ENCODE measurements at regions of chr11 and their contacts with region 1.

Region 1: GRCh38 chr11:75615706-75616105 is 53.1 kb downstream of the MAP6 start:
- DNase-seq: no peak
- H3K4me3 ChIP-seq: no peak overlapping the region
- H3K27ac ChIP-seq: no peak overlapping the region
- H3K4me1 ChIP-seq: peaks cover 8% of the 10 kb centered on the region
- H3K27me3 ChIP-seq: no peaks in the 10 kb centered on the region
- CTCF ChIP-seq: no peak
- POLR2A ChIP-seq: no peak

Region 2: GRCh38 chr11:75195121-75195551 is 420.6 kb before region 1 on chr11:
- CTCF ChIA-PET with region 1: no interaction called
- POLR2A ChIA-PET with region 1: no interaction called
- dilution Hi-C with region 1: no loop called
- intact Hi-C with region 1: no loop called
- DNase-seq: peak; percentile 10
- H3K4me3 ChIP-seq: no peak overlapping the region
- H3K27ac ChIP-seq: no peak overlapping the region
- H3K4me1 ChIP-seq: peaks cover 4% of the 10 kb centered on the region
- H3K27me3 ChIP-seq: peaks cover 0 to 2% of the 10 kb centered on the region in 2 experiments
- CTCF ChIP-seq: no peak
- POLR2A ChIP-seq: no peak

Region 3: DNA sequence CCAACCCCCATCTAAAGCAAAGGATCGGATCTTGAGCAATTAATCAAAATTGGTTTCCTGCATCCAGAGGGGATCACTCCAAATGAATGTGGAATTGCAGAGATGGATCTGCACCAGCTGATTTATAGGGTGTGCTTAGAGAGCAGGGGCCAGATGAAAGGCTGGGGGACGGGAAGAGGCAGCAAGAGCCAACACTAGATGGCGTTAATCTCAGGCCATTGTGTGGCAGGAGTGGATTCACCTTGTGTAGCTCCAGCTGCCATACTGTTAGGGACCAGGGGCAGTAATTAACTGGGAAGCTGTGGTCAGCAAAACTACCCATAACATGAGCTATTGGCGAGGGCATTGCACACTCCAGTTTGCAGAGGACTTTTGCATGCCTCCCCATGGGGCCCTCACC is 18.1 kb before region 1 on chr11:
- CTCF ChIA-PET with region 1: interaction called, 16 read pairs
- POLR2A ChIA-PET with region 1: no interaction called
- dilution Hi-C with region 1: no loop called
- intact Hi-C with region 1: no loop called
- DNase-seq: peak; percentile 41
- H3K4me3 ChIP-seq: no peak overlapping the region
- H3K27ac ChIP-seq: no peak overlapping the region
- H3K4me1 ChIP-seq: peaks cover 5% of the 10 kb centered on the region
- H3K27me3 ChIP-seq: no peaks in the 10 kb centered on the region
- CTCF ChIP-seq: peak; percentile 52 to 71
- POLR2A ChIP-seq: no peak

Region 4: GRCh38 chr11:77457340-77457739 is 1841.6 kb after region 1 on chr11:
- CTCF ChIA-PET with region 1: no interaction called
- POLR2A ChIA-PET with region 1: no interaction called
- dilution Hi-C with region 1: no loop called
- intact Hi-C with region 1: no loop called
- DNase-seq: no peak
- H3K4me3 ChIP-seq: no peak overlapping the region
- H3K27ac ChIP-seq: no peak overlapping the region
- H3K4me1 ChIP-seq: no peaks in the 10 kb centered on the region
- H3K27me3 ChIP-seq: peaks cover 5 to 17% of the 10 kb centered on the region in 2 experiments
- CTCF ChIP-seq: no peak
- POLR2A ChIP-seq: no peak

Measured in endothelial cell of umbilical vein (primary cell).